Activated CD4-positive, alpha-beta memory T cell treated with anti-CD3 and anti-CD28 coated beads for 36 hours (primary cell): ENCODE measurements at regions of chr2 and their contacts with region 1.

Region 1: GRCh38 chr2:127479219-127479825 is 47.0 kb downstream of the IWS1 start:
- DNase-seq: no peak
- H3K4me3 Mint-ChIP-seq: no peak overlapping the region
- H3K27ac Mint-ChIP-seq: no peak overlapping the region
- H3K4me1 Mint-ChIP-seq: no peaks in the 10 kb centered on the region
- H3K27me3 Mint-ChIP-seq: no peaks in the 10 kb centered on the region

Region 2: DNA sequence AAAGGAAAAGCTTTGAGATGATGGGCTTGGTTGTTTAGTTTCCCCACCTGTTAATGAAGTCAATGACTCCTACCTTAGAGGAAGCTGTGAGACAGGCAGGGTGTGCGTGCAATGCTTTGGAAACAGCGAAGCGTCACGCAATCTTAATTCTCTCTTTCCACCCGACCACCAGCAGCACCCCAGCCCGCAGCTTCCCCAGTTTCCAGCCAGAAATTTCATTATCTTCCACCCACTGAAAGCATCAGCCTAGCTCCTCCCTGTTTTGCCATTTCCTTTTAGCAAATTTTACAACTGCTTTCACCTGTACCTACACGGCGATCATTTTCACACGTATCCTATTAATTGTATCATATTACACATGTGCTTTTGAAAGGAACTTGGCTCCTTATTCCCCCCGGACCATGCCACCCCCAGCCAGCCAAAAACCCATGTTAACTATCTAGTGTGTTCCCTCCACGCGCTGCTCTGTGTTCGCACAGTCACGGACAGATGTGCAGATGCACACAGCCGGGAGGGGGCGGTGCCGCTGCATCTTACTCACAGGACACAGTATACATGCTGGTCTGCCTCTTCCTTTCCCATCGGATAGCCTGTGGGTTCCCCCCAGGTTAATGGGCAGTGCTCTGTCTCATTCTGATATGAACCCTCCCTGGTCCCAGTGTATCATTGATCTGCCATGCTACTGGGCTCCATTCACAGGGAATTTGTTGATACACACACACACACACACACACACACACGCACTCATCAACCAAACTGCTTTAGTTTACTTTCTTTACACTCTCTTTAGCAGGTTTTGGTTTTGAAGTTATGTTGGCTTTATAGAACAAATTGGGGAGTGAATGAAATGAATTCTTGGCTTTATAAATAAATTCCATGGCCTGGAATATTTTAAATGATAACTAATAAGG is 281.6 kb before region 1 on chr2:
- CTCF ChIA-PET with region 1: interaction called, 30 read pairs
- POLR2A ChIA-PET with region 1: no interaction called
- intact Hi-C with region 1: loop called (anchors 1 kb)
- DNase-seq: peak; percentile 81
- H3K4me3 Mint-ChIP-seq: peak overlapping the region; percentile 60
- H3K27ac Mint-ChIP-seq: no peak overlapping the region
- H3K4me1 Mint-ChIP-seq: peaks cover 4% of the 10 kb centered on the region
- H3K27me3 Mint-ChIP-seq: peaks cover 2% of the 10 kb centered on the region

Region 3: DNA sequence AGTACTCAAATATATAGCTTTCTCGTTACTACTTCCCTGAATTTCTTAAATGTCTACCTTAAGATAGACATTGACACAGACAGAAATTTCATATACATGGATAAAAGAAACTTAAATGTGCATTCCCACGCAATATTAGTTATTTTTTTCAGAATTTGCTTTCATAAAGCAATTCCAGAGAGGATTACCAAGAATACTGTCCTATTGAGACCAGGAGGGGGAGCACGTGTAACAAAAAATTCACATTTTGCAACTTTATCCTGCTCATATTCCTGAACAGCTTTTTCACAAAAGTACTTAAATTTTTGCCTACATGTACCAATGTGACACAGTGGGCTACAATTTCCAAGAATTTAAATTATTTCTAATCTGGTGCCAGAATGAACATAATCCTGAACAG is 154.7 kb before region 1 on chr2:
- CTCF ChIA-PET with region 1: interaction called, 37 read pairs
- POLR2A ChIA-PET with region 1: no interaction called
- intact Hi-C with region 1: loop called (anchors 1 kb)
- DNase-seq: no peak
- H3K4me3 Mint-ChIP-seq: no peak overlapping the region
- H3K27ac Mint-ChIP-seq: no peak overlapping the region
- H3K4me1 Mint-ChIP-seq: peaks cover 6% of the 10 kb centered on the region
- H3K27me3 Mint-ChIP-seq: no peaks in the 10 kb centered on the region

Region 4: GRCh38 chr2:127365211-127365643 is 114.1 kb before region 1 on chr2:
- CTCF ChIA-PET with region 1: interaction called, 22 read pairs
- POLR2A ChIA-PET with region 1: no interaction called
- intact Hi-C with region 1: no loop called
- DNase-seq: no peak
- H3K4me3 Mint-ChIP-seq: no peak overlapping the region
- H3K27ac Mint-ChIP-seq: no peak overlapping the region
- H3K4me1 Mint-ChIP-seq: peaks cover 52% of the 10 kb centered on the region
- H3K27me3 Mint-ChIP-seq: no peaks in the 10 kb centered on the region

Region 5: GRCh38 chr2:127400897-127401756 is 78.2 kb before region 1 on chr2:
- CTCF ChIA-PET with region 1: no interaction called
- POLR2A ChIA-PET with region 1: no interaction called
- intact Hi-C with region 1: no loop called
- DNase-seq: peak; percentile 68
- H3K4me3 Mint-ChIP-seq: no peak overlapping the region
- H3K27ac Mint-ChIP-seq: no peak overlapping the region
- H3K4me1 Mint-ChIP-seq: peaks cover 21% of the 10 kb centered on the region
- H3K27me3 Mint-ChIP-seq: peaks cover 8% of the 10 kb centered on the region

Region 6: DNA sequence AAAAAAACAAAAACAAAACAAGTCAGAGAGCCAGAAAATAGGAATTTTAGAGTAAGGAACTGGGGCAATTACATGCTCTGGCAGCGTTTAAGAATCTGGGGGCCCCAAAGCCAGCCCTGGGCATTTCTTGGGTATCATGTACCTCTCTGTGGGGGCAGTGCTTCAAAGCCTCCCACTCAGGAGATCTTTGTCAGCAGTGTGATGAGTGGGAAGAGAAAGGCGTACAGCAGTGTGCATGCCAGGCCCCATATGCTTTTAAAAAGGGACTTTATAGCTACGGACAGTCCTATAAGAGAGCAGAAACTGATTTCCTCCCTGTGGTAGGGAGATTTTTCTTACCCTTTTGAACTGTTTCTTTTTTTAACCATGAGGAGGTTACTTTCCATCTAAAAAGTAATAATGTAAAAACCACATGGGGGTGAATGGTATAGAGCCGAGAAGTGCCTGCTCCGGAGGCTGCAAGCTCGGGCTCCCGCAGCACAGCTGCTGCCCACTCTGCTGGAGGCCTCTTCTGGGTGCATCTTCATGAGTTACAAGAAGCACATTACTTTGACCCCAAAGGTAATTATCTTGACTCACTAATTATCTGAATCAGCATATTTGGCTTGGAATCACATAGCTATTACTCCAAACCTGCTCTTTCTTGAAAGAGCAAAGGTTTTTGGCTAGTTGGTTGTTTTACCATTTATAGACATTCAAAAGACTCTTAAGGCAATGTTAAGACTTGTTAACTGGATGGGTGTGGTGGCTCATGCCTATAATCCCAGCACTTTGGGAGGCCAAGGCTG is 14.7 kb before region 1 on chr2:
- CTCF ChIA-PET with region 1: interaction called, 15 read pairs
- POLR2A ChIA-PET with region 1: no interaction called
- intact Hi-C with region 1: no loop called
- DNase-seq: peak; percentile 28
- H3K4me3 Mint-ChIP-seq: no peak overlapping the region
- H3K27ac Mint-ChIP-seq: peak overlapping the region; percentile 16
- H3K4me1 Mint-ChIP-seq: peaks cover 37% of the 10 kb centered on the region
- H3K27me3 Mint-ChIP-seq: no peaks in the 10 kb centered on the region